PC-9 (cell line): ENCODE measurements at regions of chr17 and their contacts with region 1.

Region 1: DNA sequence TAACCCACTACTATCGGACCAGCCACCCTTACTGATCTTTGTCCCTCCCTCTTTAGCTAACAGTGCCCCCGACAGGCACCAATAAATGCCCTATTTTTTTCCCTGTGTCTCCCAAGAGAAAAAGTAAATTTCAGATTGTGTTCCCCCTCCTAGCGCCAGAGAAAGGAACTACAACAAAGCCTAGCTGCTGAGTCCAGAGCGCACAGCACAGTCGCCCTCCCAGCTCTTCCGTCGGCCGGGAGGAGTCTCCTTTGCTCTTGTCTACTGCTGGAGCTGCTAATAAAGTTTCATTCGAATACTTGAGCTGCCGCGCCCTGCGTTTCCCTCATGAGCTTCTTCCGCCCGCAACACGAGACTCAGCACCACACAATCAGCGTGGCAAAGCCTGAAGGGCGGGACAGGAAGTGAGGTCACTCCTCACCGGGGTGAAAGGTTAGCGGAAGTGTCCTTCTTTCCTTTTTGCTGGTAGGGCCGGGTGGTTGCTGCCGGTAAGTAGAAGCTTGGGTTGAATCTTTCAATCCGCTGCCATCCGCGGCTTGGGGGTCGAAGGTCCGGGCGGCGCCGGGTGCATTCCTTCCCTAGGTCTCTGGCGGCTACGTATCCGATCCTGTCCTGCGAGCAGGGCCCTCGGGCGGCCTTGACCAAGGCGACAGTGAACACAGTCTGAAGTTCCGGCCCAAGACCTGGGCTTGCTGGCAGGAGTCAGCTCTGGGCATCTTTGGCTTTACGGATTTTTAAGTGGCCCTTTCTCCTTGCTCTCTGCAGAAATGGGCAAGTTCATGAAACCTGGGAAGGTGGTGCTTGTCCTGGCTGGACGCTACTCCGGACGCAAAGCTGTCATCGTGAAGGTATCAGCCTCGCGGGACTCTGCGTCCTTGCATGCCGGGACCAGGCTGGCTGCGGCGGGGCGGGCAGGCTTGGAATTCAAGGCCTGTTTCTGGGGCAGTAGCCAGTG is at the start of gene RPL27:
- DNase-seq: peak; percentile 93 to 99
- H3K4me3 ChIP-seq: peak within 1 kb of the TSS; percentile 91
- H3K27ac ChIP-seq: peak within 1 kb of the TSS; percentile 97
- H3K4me1 ChIP-seq: peaks cover 33% of the 10 kb centered on the region
- H3K27me3 ChIP-seq: no peaks in the 10 kb centered on the region
- CTCF ChIP-seq: peak; percentile 85
- total RNA-seq, gene RPL27: 593 and 950 TPM in 2 replicates

Region 2: DNA sequence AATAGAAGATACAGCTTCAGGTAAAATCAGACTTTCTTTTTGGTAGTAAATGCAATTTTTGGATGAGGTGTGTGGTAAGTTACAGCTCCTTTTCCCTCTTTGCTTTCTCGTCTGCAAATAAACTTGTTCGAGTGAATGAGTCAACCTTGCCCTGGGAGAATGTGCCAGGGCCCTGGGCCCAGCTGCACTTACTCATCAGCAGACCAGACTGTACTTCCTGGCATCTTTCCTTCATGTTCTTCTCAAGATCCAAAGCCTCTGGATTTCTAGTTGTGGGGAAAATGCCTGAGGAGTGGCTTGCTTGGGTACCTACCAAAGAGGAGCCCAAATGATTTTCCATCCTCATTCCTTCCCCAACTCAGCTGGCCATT is 103.1 kb before region 1 on chr17:
- CTCF ChIA-PET with region 1: no interaction called
- POLR2A ChIA-PET with region 1: interaction called, 24 read pairs
- intact Hi-C with region 1: no loop called
- DNase-seq: peak; percentile 36 to 72
- H3K4me3 ChIP-seq: 0 out of 2 replicates have a peak overlapping the region, but pooled peaks have one; percentile 14
- H3K27ac ChIP-seq: no peak overlapping the region
- H3K4me1 ChIP-seq: peaks cover 12% of the 10 kb centered on the region
- H3K27me3 ChIP-seq: no peaks in the 10 kb centered on the region
- CTCF ChIP-seq: no peak

Region 3: DNA sequence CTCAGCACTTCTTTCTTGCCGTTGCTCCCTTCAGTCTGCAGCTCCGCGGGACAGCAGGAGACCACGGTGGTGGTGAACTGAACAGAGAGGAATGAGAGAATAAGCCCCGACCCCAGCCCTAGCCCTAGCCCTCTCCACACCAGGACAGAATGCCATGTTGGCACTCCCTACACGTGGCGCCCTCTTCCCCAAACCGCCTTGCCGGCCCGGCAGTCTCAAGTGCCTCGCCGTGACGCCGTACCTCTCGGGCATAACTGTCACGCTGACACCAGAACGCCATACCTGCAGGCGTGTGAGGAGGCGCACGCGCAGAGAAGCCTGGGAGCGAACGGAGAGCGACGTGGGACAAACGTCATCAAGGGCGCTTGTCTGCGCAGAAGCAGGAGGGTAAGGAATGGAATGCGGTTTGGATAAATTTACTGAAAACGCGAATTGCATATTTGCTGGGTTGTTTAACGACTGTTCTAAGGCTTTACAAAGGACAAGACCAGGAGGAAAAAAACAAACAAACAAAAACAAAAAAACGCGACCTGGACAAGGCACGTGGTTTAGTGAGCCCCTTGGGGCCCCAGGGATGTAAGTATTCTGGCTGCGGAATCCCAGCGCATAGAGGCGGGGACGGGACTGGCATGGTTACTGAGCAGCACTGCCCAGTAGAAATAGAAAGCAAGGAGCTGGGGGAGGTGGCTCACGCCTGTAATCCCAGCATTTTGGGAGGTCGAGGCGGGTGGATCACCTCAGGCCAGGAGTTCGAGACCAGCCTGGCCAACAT is 33.9 kb before region 1 on chr17 and contains the start of gene AARSD1:
- CTCF ChIA-PET with region 1: no interaction called
- POLR2A ChIA-PET with region 1: interaction called, 25 read pairs
- intact Hi-C with region 1: no loop called
- DNase-seq: peak; percentile 87 to 93
- H3K4me3 ChIP-seq: peak within 1 kb of the TSS; percentile 96
- H3K27ac ChIP-seq: peak within 1 kb of the TSS; percentile 83
- H3K4me1 ChIP-seq: peaks cover 8% of the 10 kb centered on the region; the same call in 1 of the 2 replicates
- H3K27me3 ChIP-seq: no peaks in the 10 kb centered on the region
- CTCF ChIP-seq: no peak
- total RNA-seq, gene AARSD1: 32.6 and 35.4 TPM in 2 replicates

Region 4: DNA sequence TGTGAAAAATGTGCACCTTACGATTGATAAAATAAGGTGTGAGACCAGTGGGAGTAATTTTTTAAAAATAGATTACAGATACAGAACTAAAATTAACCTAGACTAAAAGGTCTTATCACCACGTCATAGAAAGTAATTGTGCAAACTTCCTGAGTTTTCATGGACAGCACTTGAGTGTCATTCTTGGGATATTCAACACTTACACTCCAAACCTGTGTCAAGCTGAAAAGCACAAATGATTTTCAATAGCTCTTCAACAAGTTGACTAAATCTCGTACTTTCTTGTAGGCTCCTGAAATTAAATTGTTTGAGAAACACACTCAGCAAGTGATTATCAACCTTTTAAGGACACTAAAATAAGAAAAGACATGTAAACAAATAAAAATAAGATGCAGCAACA is 106.4 kb after region 1 on chr17:
- CTCF ChIA-PET with region 1: no interaction called
- POLR2A ChIA-PET with region 1: no interaction called
- intact Hi-C with region 1: no loop called
- DNase-seq: no peak
- H3K4me3 ChIP-seq: no peak overlapping the region
- H3K27ac ChIP-seq: no peak overlapping the region
- H3K4me1 ChIP-seq: no peaks in the 10 kb centered on the region
- H3K27me3 ChIP-seq: no peaks in the 10 kb centered on the region
- CTCF ChIP-seq: no peak

Region 5: GRCh38 chr17:43457362-43457692 is 459.1 kb after region 1 on chr17:
- CTCF ChIA-PET with region 1: no interaction called
- POLR2A ChIA-PET with region 1: interaction called, 10 read pairs
- intact Hi-C with region 1: no loop called
- DNase-seq: no peak
- H3K4me3 ChIP-seq: no peak overlapping the region
- H3K27ac ChIP-seq: peak overlapping the region; percentile 50
- H3K4me1 ChIP-seq: peaks cover 25% of the 10 kb centered on the region
- H3K27me3 ChIP-seq: no peaks in the 10 kb centered on the region
- CTCF ChIP-seq: no peak